Panc1 (cell line): ENCODE measurements at regions of chr6 and their contacts with region 1.

Region 1: GRCh38 chr6:89242574-89243330 is 25.6 kb upstream of the GABRR1 start:
- DNase-seq: no peak
- ATAC-seq: peak; percentile 80
- H3K4me3 ChIP-seq: no peak overlapping the region
- H3K27ac ChIP-seq: no peak overlapping the region
- H3K4me1 ChIP-seq: no peaks in the 10 kb centered on the region
- H3K27me3 ChIP-seq: peaks cover 13% of the 10 kb centered on the region
- CTCF ChIP-seq: peak; percentile 77

Region 2: DNA sequence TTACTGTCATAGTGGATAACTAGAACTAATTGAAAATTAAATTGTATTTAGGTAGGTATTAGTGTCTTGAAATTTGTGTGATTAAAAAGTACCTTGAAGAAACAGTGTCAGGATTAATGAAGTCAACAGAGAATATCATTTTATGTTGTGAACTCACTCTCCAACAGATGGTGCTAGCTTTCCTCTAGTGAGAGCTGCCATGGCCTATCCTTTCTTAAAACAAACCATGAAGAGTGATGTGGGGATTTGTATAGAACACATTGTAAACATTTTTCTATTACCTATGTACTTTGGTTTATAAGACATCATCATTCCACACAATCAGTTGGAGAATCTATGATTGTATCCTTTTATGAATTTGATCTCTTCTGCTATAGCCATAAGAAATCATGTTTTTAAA is 120.1 kb before region 1 on chr6:
- CTCF ChIA-PET with region 1: interaction called, 3 read pairs
- POLR2A ChIA-PET with region 1: no interaction called
- in situ Hi-C with region 1: no loop called
- intact Hi-C with region 1: loop called (anchors 1 kb)
- DNase-seq: no peak
- ATAC-seq: peak; percentile 83
- H3K4me3 ChIP-seq: no peak overlapping the region
- H3K27ac ChIP-seq: no peak overlapping the region
- H3K4me1 ChIP-seq: no peaks in the 10 kb centered on the region
- H3K27me3 ChIP-seq: no peaks in the 10 kb centered on the region; the same call in 1 of the 2 replicates
- CTCF ChIP-seq: peak; percentile 70; the same call in 1 of the 2 replicates